Activated naive CD8-positive, alpha-beta T cell treated with anti-CD3 and anti-CD28 coated beads, Interleukin-2, amount 10 ng/mL, durations not matched to agents 7 days and 5 days (primary cell): ENCODE measurements at regions of chr7 and their contacts with region 1.

Region 1: GRCh38 chr7:134514663-134515062 is 12.7 kb upstream of the AKR1B10 start:
- DNase-seq: no peak
- ATAC-seq: no peak
- H3K4me3 Mint-ChIP-seq: no peak overlapping the region
- H3K27ac Mint-ChIP-seq: no peak overlapping the region
- H3K4me1 Mint-ChIP-seq: peaks cover 2% of the 10 kb centered on the region
- H3K27me3 Mint-ChIP-seq: peaks cover 18% of the 10 kb centered on the region

Region 2: GRCh38 chr7:134432296-134433152 is 82.1 kb before region 1 on chr7:
- POLR2A ChIA-PET with region 1: interaction called, 13 read pairs
- DNase-seq: peak; percentile 69
- ATAC-seq: peak; percentile 94
- H3K4me3 Mint-ChIP-seq: peak overlapping the region; percentile 86
- H3K27ac Mint-ChIP-seq: peak overlapping the region; percentile 90
- H3K4me1 Mint-ChIP-seq: peaks cover 13% of the 10 kb centered on the region
- H3K27me3 Mint-ChIP-seq: peaks cover 7% of the 10 kb centered on the region

Region 3: DNA sequence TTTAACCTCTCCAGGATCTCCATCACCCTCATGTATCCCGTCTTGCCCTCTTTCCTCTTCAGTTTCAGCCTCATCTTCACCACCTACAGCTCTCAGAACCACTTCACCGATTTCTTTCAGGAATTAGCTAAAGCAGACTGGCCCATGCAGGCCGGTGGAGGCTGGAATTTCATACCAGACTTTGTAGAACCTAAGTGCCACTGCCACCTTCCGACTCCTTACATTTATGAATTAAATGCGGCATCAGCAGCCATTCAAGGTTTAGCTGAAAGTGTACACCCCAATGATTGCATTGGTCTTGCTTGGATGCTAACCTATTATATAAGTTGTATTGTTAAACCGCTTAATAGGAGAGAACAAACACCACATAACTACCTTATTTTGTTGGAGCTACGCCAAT is 22.7 kb before region 1 on chr7:
- POLR2A ChIA-PET with region 1: no interaction called
- DNase-seq: no peak
- ATAC-seq: no peak
- H3K4me3 Mint-ChIP-seq: no peak overlapping the region
- H3K27ac Mint-ChIP-seq: no peak overlapping the region
- H3K4me1 Mint-ChIP-seq: no peaks in the 10 kb centered on the region
- H3K27me3 Mint-ChIP-seq: peaks cover 20% of the 10 kb centered on the region